ENCODE measurements at regions of chr9 and their contacts with region 1.

Region 1: GRCh38 chr9:134325817-134326723 is at the start of gene RXRA:
- DNase-seq: peak; percentile 58
- ATAC-seq: peak; percentile 72
- H3K4me3 Mint-ChIP-seq: peak within 1 kb of the TSS; percentile 80
- H3K27ac Mint-ChIP-seq: no peak within 1 kb of the TSS
- H3K4me1 Mint-ChIP-seq: peaks cover 11% of the 10 kb centered on the region
- H3K27me3 Mint-ChIP-seq: no peaks in the 10 kb centered on the region
- CTCF ChIP-seq: no peak
- total RNA-seq, gene RXRA: 4.6 and 5.0 TPM in 2 replicates

Region 2: DNA sequence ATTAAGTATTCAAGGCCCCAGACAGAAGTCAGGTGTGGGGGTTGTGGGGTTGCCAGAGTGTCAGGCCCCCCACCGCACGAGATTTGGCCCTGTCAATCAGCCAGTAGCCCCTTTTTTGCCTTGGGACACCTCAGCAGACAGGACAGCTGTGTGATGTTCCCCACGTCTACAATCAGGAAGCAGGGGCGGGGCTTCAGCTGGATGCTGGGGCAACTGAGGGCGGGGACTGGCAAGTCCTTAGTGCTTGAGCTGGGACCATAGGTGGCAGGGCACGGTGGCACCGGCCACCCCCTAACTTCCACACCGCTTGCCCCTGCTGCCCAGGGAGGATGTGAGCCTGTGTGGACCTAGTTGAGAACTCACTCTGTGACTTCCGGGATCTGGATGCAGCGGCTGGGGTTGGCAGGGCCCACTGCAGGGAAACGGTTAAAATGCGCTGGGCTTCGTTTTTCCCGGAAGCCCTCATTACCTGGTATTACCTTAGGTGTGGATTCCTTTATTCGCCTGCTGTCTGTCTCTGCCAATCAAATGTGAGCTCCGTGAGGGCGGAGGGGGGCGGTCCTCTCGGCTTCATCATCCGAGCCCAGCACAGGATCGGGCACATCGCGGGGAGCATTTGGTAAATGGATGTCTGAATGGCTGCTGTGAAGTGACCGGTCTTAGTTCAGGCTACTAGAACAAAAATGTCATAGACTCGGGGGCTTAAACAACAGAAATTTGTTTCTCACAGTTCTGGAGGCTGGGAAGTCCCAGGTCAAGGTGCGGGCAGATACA is 1302.8 kb before region 1 on chr9:
- CTCF ChIA-PET with region 1: no interaction called
- POLR2A ChIA-PET with region 1: no interaction called
- intact Hi-C with region 1: no loop called
- DNase-seq: no peak
- ATAC-seq: no peak
- H3K4me3 Mint-ChIP-seq: no peak overlapping the region
- H3K27ac Mint-ChIP-seq: no peak overlapping the region
- H3K4me1 Mint-ChIP-seq: peaks cover 7% of the 10 kb centered on the region
- H3K27me3 Mint-ChIP-seq: no peaks in the 10 kb centered on the region
- CTCF ChIP-seq: no peak

Region 3: GRCh38 chr9:134175808-134176598 is 150.1 kb before region 1 on chr9:
- CTCF ChIA-PET with region 1: interaction called, 4 read pairs
- POLR2A ChIA-PET with region 1: no interaction called
- intact Hi-C with region 1: loop called (anchors 2 kb)
- DNase-seq: no peak
- ATAC-seq: no peak
- H3K4me3 Mint-ChIP-seq: no peak overlapping the region
- H3K27ac Mint-ChIP-seq: no peak overlapping the region
- H3K4me1 Mint-ChIP-seq: peaks cover 17% of the 10 kb centered on the region
- H3K27me3 Mint-ChIP-seq: peaks cover 29% of the 10 kb centered on the region
- CTCF ChIP-seq: no peak

Region 4: GRCh38 chr9:134391314-134392231 is 65.5 kb after region 1 on chr9:
- CTCF ChIA-PET with region 1: no interaction called
- POLR2A ChIA-PET with region 1: interaction called, 3 read pairs
- intact Hi-C with region 1: loop called (anchors 5 kb)
- DNase-seq: peak; percentile 62
- ATAC-seq: peak; percentile 59
- H3K4me3 Mint-ChIP-seq: peak overlapping the region; percentile 81
- H3K27ac Mint-ChIP-seq: peak overlapping the region; percentile 98
- H3K4me1 Mint-ChIP-seq: peaks cover 66% of the 10 kb centered on the region
- H3K27me3 Mint-ChIP-seq: no peaks in the 10 kb centered on the region
- CTCF ChIP-seq: no peak

Region 5: DNA sequence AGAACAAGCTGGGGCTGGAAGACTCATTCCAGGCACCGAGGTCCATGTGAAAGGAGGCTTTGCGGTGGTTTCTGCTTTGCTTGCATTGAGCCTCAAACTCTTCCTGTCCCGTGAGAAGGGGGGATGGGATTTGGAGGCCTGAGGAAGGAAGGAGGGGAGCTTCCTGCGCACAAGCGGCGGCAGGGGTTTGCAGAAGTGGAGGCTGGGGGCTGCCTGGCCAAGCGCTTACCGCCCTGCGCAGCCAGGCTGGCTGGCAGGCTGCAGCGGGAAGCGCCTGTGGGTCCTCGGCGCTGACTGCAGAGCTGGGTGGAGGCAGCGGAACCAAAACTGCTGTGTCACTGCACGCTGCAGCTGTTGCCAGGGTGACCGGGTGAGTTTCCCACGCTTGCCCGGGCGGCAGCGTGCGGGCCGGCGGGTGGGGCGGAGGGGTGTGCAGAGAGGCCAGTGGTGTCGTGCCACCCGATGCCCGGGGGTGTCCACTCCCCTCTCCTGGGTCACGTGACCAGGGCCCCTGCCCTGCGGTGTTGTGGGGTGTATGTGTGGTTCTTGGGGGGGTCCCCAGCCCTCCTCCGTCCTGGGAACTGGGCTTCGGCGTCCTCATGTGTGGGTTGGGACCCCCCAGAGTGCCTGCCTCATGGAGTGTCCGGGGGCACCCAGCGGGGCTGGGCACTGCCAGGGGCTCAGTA is 81.2 kb after region 1 on chr9:
- CTCF ChIA-PET with region 1: no interaction called
- POLR2A ChIA-PET with region 1: no interaction called
- intact Hi-C with region 1: loop called (anchors 1 kb)
- DNase-seq: peak; percentile 80
- ATAC-seq: peak; percentile 88
- H3K4me3 Mint-ChIP-seq: peak overlapping the region; percentile 59
- H3K27ac Mint-ChIP-seq: peak overlapping the region; percentile 35
- H3K4me1 Mint-ChIP-seq: peaks cover 55% of the 10 kb centered on the region
- H3K27me3 Mint-ChIP-seq: no peaks in the 10 kb centered on the region
- CTCF ChIP-seq: no peak

Region 6: DNA sequence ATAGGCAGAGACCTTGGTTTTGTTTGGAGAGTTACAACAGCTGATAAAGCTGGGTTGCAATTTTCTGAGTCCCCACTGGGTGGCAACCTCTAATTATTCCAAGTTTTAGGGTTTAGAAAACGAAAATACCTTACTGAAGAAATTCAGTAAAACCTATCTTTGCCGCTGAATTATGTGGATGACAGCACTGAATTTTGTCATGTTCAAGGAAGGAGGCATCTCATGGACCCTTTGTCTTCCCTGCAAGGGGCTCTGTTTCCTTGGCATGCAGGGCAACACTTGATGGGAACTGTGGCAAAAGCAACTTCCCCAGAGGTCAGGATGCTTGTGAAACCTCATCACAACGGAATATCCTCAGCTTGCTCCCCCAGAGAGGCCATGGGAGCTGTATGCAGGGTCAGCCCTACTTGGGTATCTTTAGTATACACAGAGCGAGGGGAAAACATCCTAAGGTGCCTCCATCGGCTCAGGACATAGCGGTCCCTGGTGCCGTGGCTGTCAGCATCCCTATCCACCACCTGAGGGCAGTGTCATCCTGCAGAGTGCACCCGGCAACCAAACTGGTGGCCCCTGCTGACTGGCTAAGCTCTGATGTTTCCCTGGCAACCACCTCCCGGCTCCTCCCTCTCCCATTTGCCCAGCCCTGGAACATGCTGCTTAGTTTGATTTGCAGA is 123.3 kb after region 1 on chr9:
- CTCF ChIA-PET with region 1: no interaction called
- POLR2A ChIA-PET with region 1: no interaction called
- intact Hi-C with region 1: loop called (anchors 10 kb)
- DNase-seq: peak; percentile 65
- ATAC-seq: peak; percentile 100
- H3K4me3 Mint-ChIP-seq: no peak overlapping the region
- H3K27ac Mint-ChIP-seq: no peak overlapping the region
- H3K4me1 Mint-ChIP-seq: peaks cover 13% of the 10 kb centered on the region
- H3K27me3 Mint-ChIP-seq: no peaks in the 10 kb centered on the region
- CTCF ChIP-seq: no peak

Measured in activated B cell treated with CpG ODN at 0.5 μM for 24 hours (primary cell).